Activated CD4-positive, alpha-beta memory T cell treated with anti-CD3 and anti-CD28 coated beads, Interleukin-2, amount 10 ng/mL, durations not matched to agents 7 days and 5 days (primary cell): ENCODE measurements at regions of chr1 and their contacts with region 1.

Region 1: DNA sequence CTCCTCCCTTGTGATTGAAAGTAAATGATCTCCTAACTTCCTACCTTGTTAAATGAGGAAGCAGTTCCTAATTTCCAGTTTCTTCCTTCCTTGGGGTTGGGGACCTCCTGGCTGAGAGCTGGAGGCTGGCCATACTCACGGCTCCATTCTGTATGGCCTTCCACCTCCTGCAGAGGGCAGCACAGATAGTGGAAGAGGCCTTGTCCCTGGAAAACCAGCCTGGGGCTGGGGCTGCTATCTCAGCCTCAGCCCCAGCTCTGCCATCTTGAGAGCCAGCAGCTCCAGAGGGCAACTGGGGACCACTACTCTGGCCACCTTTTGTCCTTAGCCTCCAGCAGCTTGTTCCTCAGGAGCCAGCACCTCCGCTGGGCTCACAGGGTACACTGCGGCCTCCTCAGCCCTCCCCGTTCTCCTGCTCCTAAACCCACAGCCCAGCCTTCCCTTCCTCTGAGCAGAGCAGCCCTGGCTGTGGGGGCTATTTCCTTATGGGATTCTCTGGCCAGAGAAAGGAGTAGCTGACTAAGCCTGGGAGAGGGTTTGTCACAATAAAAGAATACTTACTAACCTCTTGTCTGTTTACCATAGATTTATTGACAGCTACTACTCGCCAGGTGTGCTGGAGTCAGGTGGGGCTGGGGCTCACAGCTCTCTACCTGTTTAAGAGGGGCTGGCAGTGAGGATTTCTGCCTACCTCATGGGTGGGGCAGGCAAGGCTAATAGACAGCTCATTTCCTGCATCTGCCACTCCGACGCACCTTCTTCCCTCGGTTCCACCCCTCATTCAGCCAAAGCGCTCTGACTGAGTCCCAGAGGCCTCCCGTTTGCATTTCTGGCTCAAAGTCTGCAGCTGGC is 6.3 kb downstream of the TMEM234 start:
- DNase-seq: peak; percentile 71
- H3K4me3 Mint-ChIP-seq: no peak overlapping the region
- H3K27ac Mint-ChIP-seq: peak overlapping the region; percentile 72
- H3K4me1 Mint-ChIP-seq: peaks cover 24% of the 10 kb centered on the region
- H3K27me3 Mint-ChIP-seq: no peaks in the 10 kb centered on the region

Region 2: GRCh38 chr1:31855038-31855845 is 360.6 kb before region 1 on chr1:
- CTCF ChIA-PET with region 1: no interaction called
- POLR2A ChIA-PET with region 1: no interaction called
- DNase-seq: no peak
- H3K4me3 Mint-ChIP-seq: no peak overlapping the region
- H3K27ac Mint-ChIP-seq: no peak overlapping the region
- H3K4me1 Mint-ChIP-seq: no peaks in the 10 kb centered on the region
- H3K27me3 Mint-ChIP-seq: peaks cover 4% of the 10 kb centered on the region

Region 3: DNA sequence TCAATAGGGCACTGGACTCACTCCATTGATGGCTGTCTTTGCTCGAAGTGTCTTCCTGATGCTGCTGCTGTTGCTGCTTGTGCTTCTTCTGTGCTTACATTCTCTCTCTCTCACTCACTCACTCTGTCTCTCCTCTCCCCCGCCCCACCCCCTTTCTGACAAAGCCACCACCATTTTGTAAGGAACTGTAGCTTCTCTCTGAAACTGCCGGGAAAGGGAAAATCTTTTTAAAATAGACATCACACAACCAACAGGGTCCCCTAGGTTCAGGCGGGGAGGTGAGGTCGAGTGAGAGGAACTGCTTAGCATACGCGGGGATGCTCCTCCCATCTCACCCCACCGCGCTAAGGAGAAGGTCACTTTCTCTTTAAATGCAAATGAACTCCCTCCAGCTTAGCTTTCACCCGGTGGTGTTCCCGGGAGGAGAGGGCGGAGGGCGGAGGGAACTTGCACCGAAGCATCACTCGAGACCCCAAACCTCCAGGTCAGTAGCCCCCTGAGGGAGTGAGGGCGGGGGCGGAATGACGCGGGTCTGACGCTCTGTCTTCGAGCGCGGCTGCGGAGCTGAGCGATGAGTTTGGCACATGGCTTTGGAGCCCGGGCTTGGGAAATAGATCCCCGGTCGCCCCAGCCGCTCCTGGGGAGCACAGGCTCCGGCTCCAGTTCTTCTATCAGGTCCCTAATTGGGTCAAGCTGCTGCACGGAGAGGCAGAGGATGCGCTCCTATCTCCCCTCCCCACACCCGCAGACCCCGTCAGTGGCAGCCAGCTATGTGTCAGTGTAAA is 15.4 kb before region 1 on chr1 and contains the start of gene CCDC28B:
- CTCF ChIA-PET with region 1: interaction called, 39 read pairs
- POLR2A ChIA-PET with region 1: interaction called, 10 read pairs
- DNase-seq: peak; percentile 54
- H3K4me3 Mint-ChIP-seq: peak within 1 kb of the TSS; percentile 72
- H3K27ac Mint-ChIP-seq: peak within 1 kb of the TSS; percentile 79
- H3K4me1 Mint-ChIP-seq: peaks cover 72% of the 10 kb centered on the region
- H3K27me3 Mint-ChIP-seq: no peaks in the 10 kb centered on the region
- total RNA-seq, gene CCDC28B: 20.2 to 23.5 TPM

Region 4: GRCh38 chr1:32247983-32248889 is 32.4 kb after region 1 on chr1:
- CTCF ChIA-PET with region 1: interaction called, 57 read pairs
- POLR2A ChIA-PET with region 1: interaction called, 38 read pairs
- DNase-seq: peak; percentile 83
- H3K4me3 Mint-ChIP-seq: peak overlapping the region; percentile 63
- H3K27ac Mint-ChIP-seq: peak overlapping the region; percentile 99
- H3K4me1 Mint-ChIP-seq: peaks cover 48% of the 10 kb centered on the region
- H3K27me3 Mint-ChIP-seq: no peaks in the 10 kb centered on the region

Region 5: DNA sequence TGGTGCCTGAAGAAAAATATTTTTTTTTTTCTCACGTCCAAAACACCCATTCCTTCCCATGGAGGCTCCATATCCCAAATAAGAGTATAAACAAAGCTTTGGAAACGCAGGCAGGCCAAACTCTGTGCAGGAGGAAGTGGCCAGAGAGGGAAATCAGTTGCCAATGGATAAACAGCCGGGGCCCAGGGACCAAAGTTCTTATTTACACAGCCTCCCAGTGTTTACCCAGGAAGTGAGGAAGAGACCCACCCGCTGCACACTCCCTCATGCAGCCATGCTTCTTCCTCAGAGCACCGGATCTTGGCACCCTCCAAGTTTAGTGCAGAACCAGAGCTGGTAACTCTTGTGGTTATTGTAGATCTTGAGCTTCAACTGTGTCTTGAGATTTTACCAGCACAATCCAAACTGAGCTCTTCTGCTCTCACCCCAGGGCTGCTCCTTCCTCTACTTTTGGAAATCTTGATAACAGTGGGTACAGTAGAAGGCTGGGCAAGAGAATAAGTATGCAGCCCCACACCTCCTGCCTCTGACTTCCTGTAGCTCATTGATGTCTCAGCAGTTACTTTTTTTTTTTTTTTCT is 105.9 kb after region 1 on chr1:
- CTCF ChIA-PET with region 1: interaction called, 20 read pairs
- POLR2A ChIA-PET with region 1: interaction called, 6 read pairs
- DNase-seq: peak; percentile 53
- H3K4me3 Mint-ChIP-seq: peak overlapping the region; percentile 57
- H3K27ac Mint-ChIP-seq: peak overlapping the region; percentile 91
- H3K4me1 Mint-ChIP-seq: peaks cover 58% of the 10 kb centered on the region
- H3K27me3 Mint-ChIP-seq: no peaks in the 10 kb centered on the region

Region 6: GRCh38 chr1:32400876-32401631 is 185.2 kb after region 1 on chr1:
- CTCF ChIA-PET with region 1: interaction called, 14 read pairs
- POLR2A ChIA-PET with region 1: no interaction called
- DNase-seq: peak; percentile 59
- H3K4me3 Mint-ChIP-seq: no peak overlapping the region
- H3K27ac Mint-ChIP-seq: no peak overlapping the region
- H3K4me1 Mint-ChIP-seq: no peaks in the 10 kb centered on the region
- H3K27me3 Mint-ChIP-seq: peaks cover 13% of the 10 kb centered on the region